B cell (primary cell): ENCODE measurements at regions of chr13 and their contacts with region 1.

Region 1: DNA sequence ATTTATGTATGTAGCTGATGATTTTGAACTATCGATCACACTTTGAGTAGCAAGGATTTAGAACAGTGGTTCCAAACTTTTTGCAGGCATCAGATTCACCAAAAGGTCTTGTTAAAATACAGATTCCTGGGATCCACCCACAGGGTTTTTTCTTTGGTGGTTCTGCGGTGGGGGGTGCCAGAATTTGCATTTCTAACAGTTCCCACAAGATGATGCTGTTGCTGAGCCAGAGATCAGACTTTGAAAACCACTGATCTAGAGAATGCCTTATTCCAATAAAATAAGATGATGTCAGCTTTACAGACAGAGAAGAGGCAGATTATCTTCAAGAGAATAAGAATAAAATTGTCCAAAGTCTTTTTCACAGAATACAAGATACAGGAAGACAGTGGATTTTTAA is 80.9 kb upstream of the SHISA2 start:
- DNase-seq: peak; percentile 16
- ATAC-seq: no peak
- H3K4me3 ChIP-seq: no peak overlapping the region
- H3K4me3 Mint-ChIP-seq: no peak overlapping the region
- H3K27ac ChIP-seq: no peak overlapping the region
- H3K27ac Mint-ChIP-seq: no peak overlapping the region
- H3K4me1 ChIP-seq: no peaks in the 10 kb centered on the region
- H3K4me1 Mint-ChIP-seq: no peaks in the 10 kb centered on the region
- H3K27me3 ChIP-seq: no peaks in the 10 kb centered on the region
- H3K27me3 Mint-ChIP-seq: peaks cover 3% of the 10 kb centered on the region
- CTCF ChIP-seq: peak; percentile 22

Region 2: DNA sequence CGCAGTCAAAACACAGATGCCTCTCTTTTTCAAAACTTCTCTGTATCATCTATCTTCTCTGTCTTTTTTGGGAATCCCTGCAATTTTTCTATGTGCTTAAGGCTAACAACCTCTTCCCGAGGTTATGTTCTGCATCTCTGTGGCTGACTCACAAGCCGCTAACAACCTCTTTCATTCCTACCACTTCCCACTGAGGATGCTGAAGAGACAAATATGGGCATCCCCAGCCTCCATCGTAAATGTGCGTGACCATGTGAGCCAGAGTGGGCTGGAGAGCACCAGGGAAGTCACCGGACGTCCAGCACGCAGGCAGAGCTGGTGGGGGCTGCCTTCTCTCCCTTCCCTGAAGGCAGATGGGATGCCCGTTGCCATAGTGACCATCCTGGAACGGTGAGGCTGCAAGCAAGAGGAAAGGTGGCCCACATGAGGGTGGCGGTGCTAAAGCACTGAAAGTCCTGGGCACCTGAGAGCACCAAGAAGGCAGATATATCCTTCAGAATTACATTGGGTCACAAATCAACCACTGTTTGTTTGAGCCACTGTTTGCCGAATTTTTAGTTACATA is 203.7 kb before region 1 on chr13:
- CTCF ChIA-PET with region 1: no interaction called
- POLR2A ChIA-PET with region 1: no interaction called
- intact Hi-C with region 1: no loop called
- DNase-seq: no peak
- ATAC-seq: no peak
- H3K4me3 ChIP-seq: no peak overlapping the region
- H3K4me3 Mint-ChIP-seq: no peak overlapping the region
- H3K27ac ChIP-seq: no peak overlapping the region
- H3K27ac Mint-ChIP-seq: no peak overlapping the region
- H3K4me1 ChIP-seq: no peaks in the 10 kb centered on the region
- H3K4me1 Mint-ChIP-seq: no peaks in the 10 kb centered on the region
- H3K27me3 ChIP-seq: no peaks in the 10 kb centered on the region
- H3K27me3 Mint-ChIP-seq: peaks cover 10% of the 10 kb centered on the region
- CTCF ChIP-seq: no peak

Region 3: GRCh38 chr13:26112843-26113242 is 19.9 kb before region 1 on chr13:
- CTCF ChIA-PET with region 1: no interaction called
- POLR2A ChIA-PET with region 1: no interaction called
- intact Hi-C with region 1: no loop called
- DNase-seq: no peak
- ATAC-seq: no peak
- H3K4me3 ChIP-seq: no peak overlapping the region
- H3K4me3 Mint-ChIP-seq: no peak overlapping the region
- H3K27ac ChIP-seq: no peak overlapping the region
- H3K27ac Mint-ChIP-seq: no peak overlapping the region
- H3K4me1 ChIP-seq: no peaks in the 10 kb centered on the region
- H3K4me1 Mint-ChIP-seq: no peaks in the 10 kb centered on the region
- H3K27me3 ChIP-seq: no peaks in the 10 kb centered on the region
- H3K27me3 Mint-ChIP-seq: peaks cover 8% of the 10 kb centered on the region
- CTCF ChIP-seq: no peak

Region 4: GRCh38 chr13:26498656-26499591 is 366.2 kb after region 1 on chr13:
- CTCF ChIA-PET with region 1: interaction called, 13 read pairs
- POLR2A ChIA-PET with region 1: no interaction called
- intact Hi-C with region 1: loop called (anchors 2 kb)
- DNase-seq: no peak
- ATAC-seq: no peak
- H3K4me3 ChIP-seq: no peak overlapping the region
- H3K4me3 Mint-ChIP-seq: no peak overlapping the region
- H3K27ac ChIP-seq: no peak overlapping the region
- H3K27ac Mint-ChIP-seq: no peak overlapping the region
- H3K4me1 ChIP-seq: no peaks in the 10 kb centered on the region
- H3K4me1 Mint-ChIP-seq: no peaks in the 10 kb centered on the region
- H3K27me3 ChIP-seq: peaks cover 0 to 3% (median 1%) of the 10 kb centered on the region in 4 experiments
- H3K27me3 Mint-ChIP-seq: peaks cover 10% of the 10 kb centered on the region
- CTCF ChIP-seq: no peak

Region 5: GRCh38 chr13:26698392-26699196 is 565.8 kb after region 1 on chr13:
- CTCF ChIA-PET with region 1: interaction called, 5 read pairs
- POLR2A ChIA-PET with region 1: no interaction called
- intact Hi-C with region 1: loop called (anchors 2 kb)
- DNase-seq: peak; percentile 80
- ATAC-seq: peak; percentile 87
- H3K4me3 ChIP-seq: no peak overlapping the region
- H3K4me3 Mint-ChIP-seq: no peak overlapping the region
- H3K27ac ChIP-seq: no peak overlapping the region
- H3K27ac Mint-ChIP-seq: no peak overlapping the region
- H3K4me1 ChIP-seq: peaks cover 0 to 5% of the 10 kb centered on the region in 2 donors
- H3K4me1 Mint-ChIP-seq: peaks cover 6% of the 10 kb centered on the region
- H3K27me3 ChIP-seq: peaks cover 0 to 9% (median 0%) of the 10 kb centered on the region in 4 experiments
- H3K27me3 Mint-ChIP-seq: peaks cover 9% of the 10 kb centered on the region
- CTCF ChIP-seq: peak; percentile 97